ENCODE measurements at regions of chr17 and their contacts with region 1.

Region 1: GRCh38 chr17:35578197-35578928 is at the start of gene PEX12:
- DNase-seq: peak; percentile 65

Region 2: GRCh38 chr17:35548208-35548810 is 30.1 kb before region 1 on chr17:
- CTCF ChIA-PET with region 1: no interaction called
- POLR2A ChIA-PET with region 1: interaction called, 10 read pairs
- DNase-seq: no peak

Region 3: DNA sequence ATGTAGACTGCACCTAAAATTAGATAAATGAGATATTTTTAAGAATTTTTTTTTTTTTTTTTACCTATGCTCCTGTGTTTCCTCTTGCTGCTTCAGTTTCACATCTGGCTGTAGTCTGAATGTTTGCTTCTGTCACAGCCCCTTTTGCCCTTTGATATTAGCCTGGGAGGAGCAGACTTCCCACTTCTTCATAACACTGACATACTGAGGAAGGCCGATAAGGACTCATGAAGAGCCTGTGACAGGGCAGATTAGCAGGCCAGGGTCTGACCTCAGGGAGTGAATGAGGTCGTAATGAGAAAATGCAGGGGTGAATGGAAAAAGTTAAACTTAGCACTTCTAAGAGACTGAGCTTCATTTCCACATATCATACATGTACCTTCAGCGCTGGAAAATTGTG is 17.7 kb before region 1 on chr17 and contains the start of gene SLFN14:
- CTCF ChIA-PET with region 1: no interaction called
- POLR2A ChIA-PET with region 1: interaction called, 132 read pairs
- DNase-seq: no peak

Region 4: DNA sequence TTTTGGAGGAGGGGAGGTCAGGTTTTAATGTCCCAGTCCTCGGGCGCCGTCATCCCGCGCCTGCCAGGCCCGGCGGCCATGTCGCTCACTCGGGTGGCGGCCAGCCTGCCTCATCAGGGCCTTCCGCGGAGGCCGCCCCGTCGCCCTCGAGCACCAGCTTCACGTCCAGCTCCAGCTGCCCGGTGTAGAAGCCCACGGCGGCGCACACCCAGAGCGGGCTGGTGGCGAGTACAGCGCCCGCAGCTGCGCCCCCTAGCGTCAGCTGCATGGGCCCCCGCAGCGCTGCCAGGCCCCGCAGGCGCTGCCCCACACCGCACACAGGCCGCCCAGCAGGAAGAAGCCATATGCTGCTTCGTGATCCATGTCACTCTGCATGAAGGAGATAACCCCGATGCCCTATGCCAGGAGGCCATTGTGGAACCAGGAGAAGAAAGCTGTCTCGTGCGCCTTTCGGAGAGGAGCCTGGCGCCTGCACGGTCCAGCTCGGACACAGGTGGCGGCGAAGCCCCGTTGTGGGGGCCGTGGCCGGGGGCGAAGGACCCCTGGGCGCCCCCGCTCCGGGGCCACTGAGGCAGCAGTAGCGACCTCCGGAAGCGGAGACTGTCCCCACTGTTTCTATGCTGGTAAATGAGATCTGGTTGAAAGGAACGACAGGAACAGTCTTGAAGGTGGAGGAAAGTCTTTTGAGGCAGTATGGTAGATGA is 18.3 kb after region 1 on chr17:
- CTCF ChIA-PET with region 1: no interaction called
- POLR2A ChIA-PET with region 1: interaction called, 134 read pairs
- DNase-seq: no peak

Region 5: GRCh38 chr17:35612924-35613521 is 34.7 kb after region 1 on chr17:
- CTCF ChIA-PET with region 1: no interaction called
- POLR2A ChIA-PET with region 1: interaction called, 18 read pairs
- DNase-seq: peak; percentile 14

Measured in HEK293T (cell line).